OCI-LY7 (cell line): ENCODE measurements at regions of chr3 and their contacts with region 1.

Region 1: GRCh38 chr3:126389112-126389793 is 5.5 kb upstream of the CFAP100 start:
- DNase-seq: peak; percentile 81
- H3K4me3 ChIP-seq: peak overlapping the region; percentile 48
- H3K27ac ChIP-seq: no peak overlapping the region
- H3K4me1 ChIP-seq: peaks cover 14% of the 10 kb centered on the region
- CTCF ChIP-seq: peak; percentile 89

Region 2: DNA sequence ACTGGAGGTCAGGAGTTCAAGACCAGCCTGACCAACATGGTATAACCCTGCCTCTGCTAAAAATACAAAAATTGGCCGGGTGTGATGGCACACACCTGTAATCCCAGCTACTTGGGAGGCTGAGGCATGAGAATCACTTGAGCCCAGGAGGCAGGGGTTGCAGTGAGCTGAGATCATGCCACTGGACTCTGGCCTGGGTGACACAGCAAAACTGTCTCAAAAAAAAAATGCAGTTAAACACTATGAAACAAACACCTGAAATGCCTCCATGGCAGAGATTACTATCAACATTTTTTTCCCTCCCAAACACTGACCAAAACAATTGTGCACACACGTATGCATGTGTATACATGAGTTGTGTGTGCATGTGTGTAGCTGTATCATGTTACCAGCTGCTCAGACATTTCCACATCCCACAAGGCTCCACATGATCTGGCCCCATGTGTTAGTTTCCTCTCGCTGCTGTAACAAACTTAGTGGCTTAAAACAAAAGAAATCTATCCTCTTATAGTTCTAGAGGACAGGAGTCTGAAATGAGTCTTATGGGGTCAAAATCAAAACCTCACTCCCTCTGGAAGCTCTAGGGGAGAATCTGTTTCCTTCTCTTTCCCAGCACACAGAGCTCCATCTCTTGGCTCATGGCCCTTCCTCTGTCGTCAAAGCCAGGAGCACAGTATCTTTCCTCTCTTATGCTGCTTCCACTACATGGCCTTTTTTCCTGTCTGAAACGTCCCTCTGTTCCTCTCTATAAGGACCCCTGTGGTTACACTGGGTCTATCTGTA is 339.8 kb before region 1 on chr3:
- CTCF ChIA-PET with region 1: no interaction called
- POLR2A ChIA-PET with region 1: no interaction called
- intact Hi-C with region 1: no loop called
- DNase-seq: no peak
- H3K4me3 ChIP-seq: no peak overlapping the region
- H3K27ac ChIP-seq: no peak overlapping the region
- H3K4me1 ChIP-seq: no peaks in the 10 kb centered on the region
- CTCF ChIP-seq: no peak

Region 3: GRCh38 chr3:126134219-126134975 is 254.9 kb before region 1 on chr3:
- CTCF ChIA-PET with region 1: no interaction called
- POLR2A ChIA-PET with region 1: no interaction called
- intact Hi-C with region 1: loop called (anchors 1 kb)
- DNase-seq: peak; percentile 54
- H3K4me3 ChIP-seq: no peak overlapping the region
- H3K27ac ChIP-seq: no peak overlapping the region
- H3K4me1 ChIP-seq: no peaks in the 10 kb centered on the region
- CTCF ChIP-seq: peak; percentile 80

Region 4: DNA sequence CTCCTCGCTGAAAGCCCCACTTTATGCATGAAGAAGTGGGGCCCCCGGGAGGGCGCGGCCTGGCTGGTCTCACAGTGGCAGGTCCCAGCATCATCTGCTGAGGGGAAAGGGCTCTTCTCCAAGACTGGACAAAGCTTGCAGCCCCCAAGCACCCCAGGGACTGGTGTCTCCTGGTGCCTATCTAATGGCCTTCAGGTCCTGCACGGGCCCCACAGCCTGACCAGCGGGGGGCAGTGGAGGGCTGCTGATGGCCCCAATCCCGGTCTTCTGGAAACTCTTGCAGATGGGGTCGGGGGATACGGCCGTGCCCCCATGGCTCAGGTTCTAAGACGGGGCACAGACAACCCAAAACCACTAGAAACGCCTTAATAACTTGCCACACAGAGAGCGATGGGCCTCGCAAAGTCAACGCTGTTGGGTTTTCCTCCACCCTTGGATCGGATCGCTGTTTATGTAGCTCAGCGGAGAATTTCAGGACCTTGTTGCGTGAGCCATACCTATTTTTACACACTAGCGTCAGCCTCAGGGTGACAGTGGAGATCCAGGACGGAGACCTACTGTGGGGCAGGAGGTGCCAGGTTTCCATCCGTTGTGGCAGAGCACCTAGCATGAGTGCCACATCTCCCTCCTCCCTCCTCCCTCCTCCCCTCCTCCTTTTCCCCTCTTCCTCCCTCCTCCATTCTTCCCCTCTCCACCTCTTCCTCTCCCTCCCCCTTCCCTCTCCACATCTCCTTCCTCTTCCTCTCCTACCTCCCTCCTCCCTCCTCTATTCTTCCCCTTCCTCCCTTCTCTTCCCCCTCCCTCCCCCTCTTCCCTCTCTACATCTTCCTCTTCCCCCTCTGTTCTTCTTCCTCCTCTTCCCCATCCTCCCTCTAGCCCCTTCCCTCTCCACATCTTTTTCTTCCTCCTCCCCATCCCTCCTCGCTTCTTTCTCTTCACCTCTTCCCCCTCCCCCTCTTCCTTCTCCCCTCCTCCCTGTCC is 129.6 kb before region 1 on chr3:
- CTCF ChIA-PET with region 1: interaction called, 5 read pairs
- POLR2A ChIA-PET with region 1: no interaction called
- intact Hi-C with region 1: loop called (anchors 1 kb)
- DNase-seq: peak; percentile 35
- H3K4me3 ChIP-seq: no peak overlapping the region
- H3K27ac ChIP-seq: peak overlapping the region; percentile 73
- H3K4me1 ChIP-seq: peaks cover 37% of the 10 kb centered on the region
- CTCF ChIP-seq: peak; percentile 73

Region 5: GRCh38 chr3:126373682-126374601 is 15.3 kb before region 1 on chr3:
- CTCF ChIA-PET with region 1: no interaction called
- POLR2A ChIA-PET with region 1: no interaction called
- intact Hi-C with region 1: no loop called
- DNase-seq: no peak
- H3K4me3 ChIP-seq: no peak overlapping the region
- H3K27ac ChIP-seq: no peak overlapping the region
- H3K4me1 ChIP-seq: no peaks in the 10 kb centered on the region
- CTCF ChIP-seq: no peak